Caco-2 (cell line): ENCODE measurements at regions of chr6 and their contacts with region 1.

Region 1: DNA sequence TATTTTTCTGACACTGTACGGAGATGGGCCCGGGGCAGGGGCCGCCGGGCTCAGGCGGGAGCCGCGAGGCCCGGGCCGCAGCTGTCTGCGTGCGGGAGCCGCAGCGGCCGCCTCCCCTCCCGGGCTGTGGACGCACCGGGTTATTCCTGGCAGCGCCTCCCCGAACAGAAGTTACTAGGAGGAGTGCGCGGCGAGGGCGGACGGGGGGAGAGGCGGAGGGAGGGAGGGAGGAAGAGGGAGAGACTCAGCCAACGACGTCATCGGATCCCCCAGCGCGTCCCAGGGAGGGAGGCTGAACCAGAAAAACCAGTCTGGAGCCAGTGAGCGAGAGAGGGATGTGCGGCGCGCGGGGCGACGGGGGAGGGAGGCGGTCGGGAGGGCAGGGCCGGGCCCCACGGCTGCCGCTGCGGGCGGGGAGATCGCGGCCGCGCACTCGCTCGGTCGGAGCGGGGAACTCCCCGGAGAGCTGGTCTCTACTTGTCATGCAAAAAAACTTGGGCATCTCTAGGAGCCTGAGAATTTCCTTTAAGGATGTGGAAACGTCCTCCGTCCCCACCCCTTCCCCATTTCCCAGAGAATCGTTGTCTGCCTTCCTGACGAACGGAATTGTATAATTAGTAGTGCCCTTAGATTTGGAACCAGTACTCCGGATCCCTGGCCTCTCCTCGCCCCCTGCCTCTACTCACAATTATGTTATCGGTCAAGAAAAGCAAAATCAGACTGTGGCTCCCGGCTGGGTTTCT is 1.4 kb upstream of the HIVEP2 start:
- DNase-seq: peak; percentile 91 to 95
- H3K4me3 ChIP-seq: peak overlapping the region; percentile 69
- H3K4me3 Mint-ChIP-seq: peak overlapping the region; percentile 92
- H3K27ac Mint-ChIP-seq: no peak overlapping the region
- H3K4me1 ChIP-seq: peaks cover 16% of the 10 kb centered on the region; the same call in 1 of the 2 replicates
- H3K4me1 Mint-ChIP-seq: peaks cover 29% of the 10 kb centered on the region
- H3K27me3 ChIP-seq: peaks cover 2% of the 10 kb centered on the region
- H3K27me3 Mint-ChIP-seq: peaks cover 3% of the 10 kb centered on the region
- CTCF ChIP-seq: no peak

Region 2: GRCh38 chr6:142705054-142705453 is 241.3 kb before region 1 on chr6:
- CTCF ChIA-PET with region 1: no interaction called
- POLR2A ChIA-PET with region 1: no interaction called
- intact Hi-C with region 1: no loop called
- DNase-seq: no peak
- H3K4me3 ChIP-seq: no peak overlapping the region
- H3K4me3 Mint-ChIP-seq: no peak overlapping the region
- H3K27ac Mint-ChIP-seq: no peak overlapping the region
- H3K4me1 ChIP-seq: no peaks in the 10 kb centered on the region
- H3K4me1 Mint-ChIP-seq: no peaks in the 10 kb centered on the region
- H3K27me3 ChIP-seq: no peaks in the 10 kb centered on the region
- H3K27me3 Mint-ChIP-seq: peaks cover 9% of the 10 kb centered on the region
- CTCF ChIP-seq: no peak

Region 3: GRCh38 chr6:142746524-142746923 is 199.8 kb before region 1 on chr6:
- CTCF ChIA-PET with region 1: interaction called, 3 read pairs
- POLR2A ChIA-PET with region 1: no interaction called
- intact Hi-C with region 1: loop called (anchors 5 kb)
- DNase-seq: peak; percentile 36 to 47
- H3K4me3 ChIP-seq: no peak overlapping the region
- H3K4me3 Mint-ChIP-seq: no peak overlapping the region
- H3K27ac Mint-ChIP-seq: no peak overlapping the region
- H3K4me1 ChIP-seq: no peaks in the 10 kb centered on the region
- H3K4me1 Mint-ChIP-seq: no peaks in the 10 kb centered on the region
- H3K27me3 ChIP-seq: no peaks in the 10 kb centered on the region
- H3K27me3 Mint-ChIP-seq: peaks cover 6% of the 10 kb centered on the region
- CTCF ChIP-seq: peak; percentile 46 to 61

Region 4: GRCh38 chr6:142885182-142885867 is 61.0 kb before region 1 on chr6:
- CTCF ChIA-PET with region 1: no interaction called
- POLR2A ChIA-PET with region 1: no interaction called
- intact Hi-C with region 1: loop called (anchors 1 kb)
- DNase-seq: peak; percentile 76 to 87
- H3K4me3 ChIP-seq: no peak overlapping the region
- H3K4me3 Mint-ChIP-seq: peak overlapping the region; percentile 60
- H3K27ac Mint-ChIP-seq: peak overlapping the region; percentile 65
- H3K4me1 ChIP-seq: peaks cover 34% of the 10 kb centered on the region
- H3K4me1 Mint-ChIP-seq: peaks cover 13% of the 10 kb centered on the region
- H3K27me3 ChIP-seq: no peaks in the 10 kb centered on the region
- H3K27me3 Mint-ChIP-seq: peaks cover 5% of the 10 kb centered on the region
- CTCF ChIP-seq: no peak

Region 5: DNA sequence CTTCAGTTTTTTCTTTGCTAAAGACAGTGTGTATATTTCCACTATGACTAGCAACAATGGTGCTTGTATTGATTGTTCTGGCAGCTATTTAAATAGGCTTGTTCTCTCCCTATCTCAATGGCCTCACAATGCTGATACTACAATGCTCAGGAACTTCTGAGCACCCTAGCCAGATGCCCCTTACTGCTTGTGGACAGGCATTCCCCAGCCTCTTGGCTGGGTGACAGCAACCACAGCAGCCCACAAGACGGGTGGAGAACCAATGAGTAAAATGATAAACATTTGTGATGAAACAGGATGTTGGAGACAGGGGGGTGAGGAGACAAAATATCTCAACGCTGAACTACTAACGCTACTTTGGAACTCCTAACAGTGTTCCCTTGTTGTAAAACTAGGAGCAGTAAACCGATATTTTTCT is 43.7 kb before region 1 on chr6:
- CTCF ChIA-PET with region 1: no interaction called
- POLR2A ChIA-PET with region 1: no interaction called
- intact Hi-C with region 1: no loop called
- DNase-seq: no peak
- H3K4me3 ChIP-seq: no peak overlapping the region
- H3K4me3 Mint-ChIP-seq: no peak overlapping the region
- H3K27ac Mint-ChIP-seq: no peak overlapping the region
- H3K4me1 ChIP-seq: no peaks in the 10 kb centered on the region
- H3K4me1 Mint-ChIP-seq: no peaks in the 10 kb centered on the region
- H3K27me3 ChIP-seq: no peaks in the 10 kb centered on the region
- H3K27me3 Mint-ChIP-seq: peaks cover 6% of the 10 kb centered on the region
- CTCF ChIP-seq: no peak

Region 6: DNA sequence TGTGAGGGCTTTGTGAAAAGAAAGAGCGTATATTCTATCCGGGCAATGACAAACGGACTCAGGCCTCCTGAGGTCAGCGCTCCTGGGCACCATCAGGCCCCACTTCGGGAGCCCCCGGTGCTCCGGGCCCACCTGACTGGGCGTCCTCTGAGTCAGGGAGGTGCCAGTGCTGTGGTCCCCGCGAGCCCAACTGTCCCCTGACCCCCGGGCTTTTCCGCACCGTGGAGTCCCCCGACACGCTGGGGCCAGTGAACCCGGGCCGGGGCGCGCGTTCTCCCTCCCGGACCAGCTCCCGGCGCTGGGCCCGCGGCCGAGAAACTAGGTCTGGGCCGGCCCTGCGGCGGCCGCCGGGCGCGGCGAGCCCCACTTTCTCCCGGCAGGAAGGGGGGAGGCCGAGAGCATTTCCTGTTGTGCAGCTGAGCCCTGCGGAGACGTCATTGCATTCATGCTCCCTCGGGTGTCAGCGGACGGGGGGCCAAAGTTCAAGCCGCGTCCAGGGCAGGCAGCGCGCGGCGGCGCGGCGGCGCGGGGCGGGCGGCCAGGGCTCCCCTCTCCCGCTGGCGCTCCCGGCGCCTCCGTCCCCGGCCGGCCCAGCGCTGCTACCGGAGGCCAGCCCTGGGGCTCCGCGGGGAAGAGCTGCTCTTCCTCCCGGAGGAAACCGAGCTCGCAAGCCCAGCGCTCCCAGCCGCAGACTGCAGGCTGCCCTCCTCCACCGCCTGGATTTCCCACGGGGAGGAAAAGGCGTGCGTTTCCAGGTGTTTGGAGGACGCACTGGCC is 19.7 kb before region 1 on chr6:
- CTCF ChIA-PET with region 1: no interaction called
- POLR2A ChIA-PET with region 1: no interaction called
- intact Hi-C with region 1: loop called (anchors 2 kb)
- DNase-seq: peak; percentile 81 to 86
- H3K4me3 ChIP-seq: peak overlapping the region; percentile 60
- H3K4me3 Mint-ChIP-seq: peak overlapping the region; percentile 82
- H3K27ac Mint-ChIP-seq: peak overlapping the region; percentile 79
- H3K4me1 ChIP-seq: peaks cover 7% of the 10 kb centered on the region; the same call in 1 of the 2 replicates
- H3K4me1 Mint-ChIP-seq: no peaks in the 10 kb centered on the region
- H3K27me3 ChIP-seq: no peaks in the 10 kb centered on the region
- H3K27me3 Mint-ChIP-seq: no peaks in the 10 kb centered on the region
- CTCF ChIP-seq: no peak

Region 7: DNA sequence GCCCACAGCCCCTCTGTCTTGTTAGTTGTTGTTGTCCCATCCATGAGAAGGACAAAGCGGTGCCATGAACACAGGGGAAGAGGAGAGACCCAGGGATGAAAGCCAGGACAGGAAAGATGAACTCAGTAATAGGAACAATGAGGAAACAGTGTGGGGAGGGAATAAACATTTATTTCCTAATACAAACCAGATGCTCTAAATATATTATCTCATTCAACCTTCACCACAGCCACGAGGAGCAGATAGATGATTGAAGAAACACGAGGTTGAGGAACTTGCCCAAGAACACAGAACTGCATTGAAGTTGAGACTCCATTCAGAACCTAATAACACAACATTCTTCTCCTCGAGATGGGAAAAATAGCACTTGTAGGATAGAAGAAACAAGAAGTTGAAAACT is 61.3 kb after region 1 on chr6:
- CTCF ChIA-PET with region 1: no interaction called
- POLR2A ChIA-PET with region 1: no interaction called
- intact Hi-C with region 1: no loop called
- DNase-seq: no peak
- H3K4me3 ChIP-seq: no peak overlapping the region
- H3K4me3 Mint-ChIP-seq: no peak overlapping the region
- H3K27ac Mint-ChIP-seq: no peak overlapping the region
- H3K4me1 ChIP-seq: no peaks in the 10 kb centered on the region
- H3K4me1 Mint-ChIP-seq: no peaks in the 10 kb centered on the region
- H3K27me3 ChIP-seq: no peaks in the 10 kb centered on the region
- H3K27me3 Mint-ChIP-seq: peaks cover 17% of the 10 kb centered on the region
- CTCF ChIP-seq: no peak

Region 8: DNA sequence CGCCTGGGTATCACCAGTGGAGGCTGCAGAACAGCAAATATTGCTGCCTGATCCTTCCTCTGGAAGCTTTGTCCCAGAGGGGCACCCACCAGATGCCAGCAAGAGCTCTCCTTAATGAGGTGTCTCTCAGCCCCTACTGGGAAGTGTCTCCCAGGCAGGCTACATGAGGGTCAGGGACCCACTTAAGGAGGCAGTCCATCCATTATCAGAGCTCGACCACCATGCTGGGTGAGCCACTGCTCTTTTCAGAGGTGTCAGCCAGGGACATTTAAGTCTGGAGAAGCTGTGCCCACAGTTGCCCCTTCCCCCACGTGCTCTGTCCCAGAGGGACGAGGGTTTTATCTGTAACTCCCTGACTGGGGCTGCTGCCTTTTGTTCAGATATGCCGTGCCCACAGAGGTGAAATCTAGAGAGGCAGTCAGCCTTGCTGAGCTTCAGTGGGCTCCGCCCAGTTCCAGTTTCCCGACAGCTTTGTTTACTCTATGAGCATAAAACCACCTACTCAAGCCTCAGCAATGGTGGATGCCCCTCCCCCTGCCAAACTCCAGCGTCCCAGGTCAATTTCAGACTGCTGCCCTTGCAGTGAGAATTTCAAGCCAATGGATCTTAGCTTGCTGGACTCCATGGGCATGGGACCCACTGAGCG is 88.5 kb after region 1 on chr6:
- CTCF ChIA-PET with region 1: no interaction called
- POLR2A ChIA-PET with region 1: no interaction called
- intact Hi-C with region 1: loop called (anchors 5 kb)
- DNase-seq: peak; percentile 35 to 40
- H3K4me3 ChIP-seq: no peak overlapping the region
- H3K4me3 Mint-ChIP-seq: no peak overlapping the region
- H3K27ac Mint-ChIP-seq: no peak overlapping the region
- H3K4me1 ChIP-seq: no peaks in the 10 kb centered on the region
- H3K4me1 Mint-ChIP-seq: no peaks in the 10 kb centered on the region
- H3K27me3 ChIP-seq: no peaks in the 10 kb centered on the region
- H3K27me3 Mint-ChIP-seq: peaks cover 21% of the 10 kb centered on the region
- CTCF ChIP-seq: no peak

Region 9: DNA sequence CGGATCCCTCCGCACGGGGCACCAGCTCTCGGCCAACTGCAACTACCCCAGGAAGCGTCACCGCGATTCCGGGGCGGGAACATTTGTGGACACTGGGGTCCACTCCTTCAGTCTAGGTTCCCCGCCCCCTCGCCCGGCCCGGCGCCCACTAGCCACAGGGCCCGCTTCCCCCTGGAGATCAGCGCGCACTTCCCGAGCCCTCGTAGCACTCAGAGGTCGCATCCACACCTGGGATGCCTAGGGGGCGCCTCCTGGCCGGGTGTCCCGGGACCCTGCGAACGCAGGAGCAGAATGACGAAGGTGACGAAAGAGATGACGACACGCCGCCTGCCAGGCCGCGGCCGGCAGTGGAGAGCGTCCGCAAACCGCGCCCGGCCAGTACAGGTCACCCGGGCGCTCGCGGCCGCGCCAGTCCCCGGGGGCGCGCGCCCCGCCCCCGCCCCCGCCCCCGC is 114.0 kb after region 1 on chr6:
- CTCF ChIA-PET with region 1: no interaction called
- POLR2A ChIA-PET with region 1: no interaction called
- intact Hi-C with region 1: loop called (anchors 1 kb)
- DNase-seq: peak; percentile 85 to 88
- H3K4me3 ChIP-seq: peak overlapping the region; percentile 85
- H3K4me3 Mint-ChIP-seq: peak overlapping the region; percentile 94
- H3K27ac Mint-ChIP-seq: peak overlapping the region; percentile 96
- H3K4me1 ChIP-seq: peaks cover 18% of the 10 kb centered on the region
- H3K4me1 Mint-ChIP-seq: peaks cover 8% of the 10 kb centered on the region
- H3K27me3 ChIP-seq: no peaks in the 10 kb centered on the region
- H3K27me3 Mint-ChIP-seq: no peaks in the 10 kb centered on the region
- CTCF ChIP-seq: peak in 1 of 2 experiments; percentile 35

Region 10: DNA sequence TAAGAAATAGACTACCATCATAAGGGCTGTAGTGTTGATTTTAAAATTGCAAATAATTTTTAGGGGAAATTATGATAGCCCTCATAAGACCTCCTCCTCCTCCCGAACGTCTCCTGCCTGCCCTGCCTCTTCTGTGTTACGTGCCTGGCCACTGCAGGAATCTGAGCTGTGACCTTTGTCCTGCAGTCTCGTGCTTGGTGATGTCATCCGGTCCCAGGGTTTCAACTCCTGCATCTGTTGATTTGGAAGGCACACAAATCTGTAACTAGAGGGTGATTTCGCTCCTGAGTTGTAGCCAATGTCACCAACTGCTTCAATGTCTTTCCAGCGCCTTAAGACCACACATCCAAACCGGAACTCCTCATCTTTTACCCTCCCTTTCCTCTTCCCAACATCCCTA is 277.5 kb after region 1 on chr6:
- CTCF ChIA-PET with region 1: no interaction called
- POLR2A ChIA-PET with region 1: no interaction called
- intact Hi-C with region 1: loop called (anchors 10 kb)
- DNase-seq: peak; percentile 82 to 86
- H3K4me3 ChIP-seq: no peak overlapping the region
- H3K4me3 Mint-ChIP-seq: peak overlapping the region; percentile 64
- H3K27ac Mint-ChIP-seq: peak overlapping the region; percentile 80
- H3K4me1 ChIP-seq: peaks cover 43% of the 10 kb centered on the region
- H3K4me1 Mint-ChIP-seq: peaks cover 31% of the 10 kb centered on the region
- H3K27me3 ChIP-seq: no peaks in the 10 kb centered on the region
- H3K27me3 Mint-ChIP-seq: no peaks in the 10 kb centered on the region
- CTCF ChIP-seq: no peak